ENCODE measurements at regions of chr5 and their contacts with region 1.

Region 1: GRCh38 chr5:138789771-138790242 is 36.6 kb downstream of the CTNNA1 start:
- DNase-seq: no peak
- ATAC-seq: peak; percentile 95
- H3K4me3 ChIP-seq: no peak overlapping the region
- H3K27ac ChIP-seq: no peak overlapping the region
- H3K4me1 ChIP-seq: peaks cover 12% of the 10 kb centered on the region
- H3K27me3 ChIP-seq: no peaks in the 10 kb centered on the region
- CTCF ChIP-seq: peak; percentile 56 to 73 (median 62)
- EP300 ChIP-seq: no peak
- POLR2A ChIP-seq: no peak
- RAD21 ChIP-seq: peak; percentile 31; the same call in 1 of the 2 replicates

Region 2: GRCh38 chr5:137730336-137730735 is 1059.5 kb before region 1 on chr5:
- CTCF ChIA-PET with region 1: no interaction called
- POLR2A ChIA-PET with region 1: no interaction called
- RAD21 ChIA-PET with region 1: no interaction called
- SMC1A ChIA-PET with region 1: no interaction called
- in situ Hi-C with region 1: no loop called
- intact Hi-C with region 1: no loop called
- DNase-seq: no peak
- ATAC-seq: no peak
- H3K4me3 ChIP-seq: no peak overlapping the region; the same call in 1 of the 2 replicates
- H3K27ac ChIP-seq: no peak overlapping the region
- H3K4me1 ChIP-seq: no peaks in the 10 kb centered on the region; the same call in 1 of the 2 replicates
- H3K27me3 ChIP-seq: no peaks in the 10 kb centered on the region
- CTCF ChIP-seq: no peak
- EP300 ChIP-seq: no peak
- POLR2A ChIP-seq: no peak
- RAD21 ChIP-seq: no peak

Region 3: DNA sequence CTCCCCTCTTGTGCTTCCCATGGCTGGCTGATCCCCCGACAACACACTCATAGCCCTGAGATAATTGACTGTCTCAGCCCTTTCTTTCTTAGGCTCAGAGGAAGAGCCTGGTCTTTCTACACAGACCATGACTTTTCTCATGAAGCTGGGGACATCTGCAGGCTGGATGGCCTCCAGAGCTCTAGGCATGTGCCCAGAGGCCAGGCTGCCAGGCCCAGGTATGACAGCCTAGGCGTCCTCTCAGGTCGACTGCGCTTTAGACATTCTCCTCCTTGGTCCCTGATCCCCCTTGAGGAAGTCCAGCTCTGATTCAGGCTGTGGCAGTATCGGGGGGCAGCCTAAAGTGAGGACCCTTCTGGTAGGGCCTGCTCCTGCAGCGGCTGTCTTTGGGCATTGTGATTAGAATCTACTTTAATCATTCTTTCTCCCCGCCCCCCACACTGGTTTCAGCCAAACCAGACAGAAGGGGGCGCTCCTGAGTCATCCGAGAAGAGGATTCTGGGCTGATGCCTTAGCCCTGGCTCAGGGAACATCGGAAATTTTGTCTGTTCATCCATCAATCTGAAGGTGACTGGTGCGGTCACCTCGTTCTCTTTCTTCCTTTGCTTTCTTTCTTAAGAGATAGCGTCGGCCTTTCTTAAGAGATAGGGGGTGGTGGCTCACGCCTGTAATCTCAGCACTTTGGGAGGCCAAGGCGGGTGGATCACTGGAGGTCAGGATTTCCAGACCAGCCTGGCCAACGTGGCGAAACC is 148.1 kb before region 1 on chr5:
- CTCF ChIA-PET with region 1: interaction called, 16 read pairs
- POLR2A ChIA-PET with region 1: no interaction called
- RAD21 ChIA-PET with region 1: no interaction called
- SMC1A ChIA-PET with region 1: interaction called, 10 read pairs
- in situ Hi-C with region 1: no loop called
- intact Hi-C with region 1: no loop called
- DNase-seq: no peak
- ATAC-seq: peak; percentile 91
- H3K4me3 ChIP-seq: no peak overlapping the region
- H3K27ac ChIP-seq: no peak overlapping the region
- H3K4me1 ChIP-seq: no peaks in the 10 kb centered on the region
- H3K27me3 ChIP-seq: no peaks in the 10 kb centered on the region; a peak in 2 of 4 replicates
- CTCF ChIP-seq: peak; percentile 71 to 78 (median 72)
- EP300 ChIP-seq: no peak
- POLR2A ChIP-seq: no peak
- RAD21 ChIP-seq: peak; percentile 86

Region 4: DNA sequence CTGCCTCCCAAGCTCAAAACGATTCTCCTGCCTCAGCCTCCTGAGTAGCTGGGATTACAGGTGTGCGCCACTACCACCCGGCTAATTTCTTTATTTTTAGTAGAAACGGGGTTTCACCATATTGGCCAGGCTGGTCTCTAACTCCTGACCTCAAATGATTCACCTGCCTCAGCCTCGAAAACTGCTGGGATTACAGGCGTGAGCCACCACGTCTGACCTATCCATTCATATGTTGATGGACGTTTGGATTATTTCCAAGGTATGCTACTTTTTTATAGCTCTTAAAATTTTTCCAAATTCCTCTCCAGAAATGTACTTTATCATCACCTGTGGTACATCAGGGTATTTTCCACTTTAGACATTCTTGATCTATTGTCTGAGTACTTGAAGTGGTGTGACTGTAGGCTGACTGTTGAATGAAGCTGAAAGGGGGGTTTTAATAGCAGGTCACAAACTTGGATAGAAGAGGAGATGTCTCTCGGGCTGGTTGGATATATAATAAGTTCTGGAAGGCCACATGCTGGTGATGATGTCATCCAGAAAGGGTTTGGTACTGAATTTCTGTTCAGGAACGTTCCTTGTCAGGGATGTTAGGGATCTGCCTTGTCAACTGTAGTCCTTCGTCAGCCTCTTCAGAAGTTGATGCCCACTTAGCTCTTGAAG is 29.2 kb before region 1 on chr5:
- CTCF ChIA-PET with region 1: interaction called, 24 read pairs
- POLR2A ChIA-PET with region 1: interaction called, 3 read pairs
- RAD21 ChIA-PET with region 1: no interaction called
- SMC1A ChIA-PET with region 1: interaction called, 7 read pairs
- in situ Hi-C with region 1: no loop called
- intact Hi-C with region 1: no loop called
- DNase-seq: no peak
- ATAC-seq: no peak
- H3K4me3 ChIP-seq: no peak overlapping the region
- H3K27ac ChIP-seq: no peak overlapping the region
- H3K4me1 ChIP-seq: peaks cover under 1% of the 10 kb centered on the region
- H3K27me3 ChIP-seq: no peaks in the 10 kb centered on the region
- CTCF ChIP-seq: no peak
- EP300 ChIP-seq: no peak
- POLR2A ChIP-seq: no peak
- RAD21 ChIP-seq: no peak

Region 5: GRCh38 chr5:138809391-138809790 is 19.6 kb after region 1 on chr5:
- CTCF ChIA-PET with region 1: interaction called, 74 read pairs
- POLR2A ChIA-PET with region 1: no interaction called
- RAD21 ChIA-PET with region 1: no interaction called
- SMC1A ChIA-PET with region 1: interaction called, 11 read pairs
- in situ Hi-C with region 1: no loop called
- intact Hi-C with region 1: no loop called
- DNase-seq: no peak
- ATAC-seq: no peak
- H3K4me3 ChIP-seq: no peak overlapping the region
- H3K27ac ChIP-seq: no peak overlapping the region
- H3K4me1 ChIP-seq: no peaks in the 10 kb centered on the region
- H3K27me3 ChIP-seq: no peaks in the 10 kb centered on the region
- CTCF ChIP-seq: no peak
- EP300 ChIP-seq: no peak
- POLR2A ChIP-seq: no peak
- RAD21 ChIP-seq: no peak

Region 6: DNA sequence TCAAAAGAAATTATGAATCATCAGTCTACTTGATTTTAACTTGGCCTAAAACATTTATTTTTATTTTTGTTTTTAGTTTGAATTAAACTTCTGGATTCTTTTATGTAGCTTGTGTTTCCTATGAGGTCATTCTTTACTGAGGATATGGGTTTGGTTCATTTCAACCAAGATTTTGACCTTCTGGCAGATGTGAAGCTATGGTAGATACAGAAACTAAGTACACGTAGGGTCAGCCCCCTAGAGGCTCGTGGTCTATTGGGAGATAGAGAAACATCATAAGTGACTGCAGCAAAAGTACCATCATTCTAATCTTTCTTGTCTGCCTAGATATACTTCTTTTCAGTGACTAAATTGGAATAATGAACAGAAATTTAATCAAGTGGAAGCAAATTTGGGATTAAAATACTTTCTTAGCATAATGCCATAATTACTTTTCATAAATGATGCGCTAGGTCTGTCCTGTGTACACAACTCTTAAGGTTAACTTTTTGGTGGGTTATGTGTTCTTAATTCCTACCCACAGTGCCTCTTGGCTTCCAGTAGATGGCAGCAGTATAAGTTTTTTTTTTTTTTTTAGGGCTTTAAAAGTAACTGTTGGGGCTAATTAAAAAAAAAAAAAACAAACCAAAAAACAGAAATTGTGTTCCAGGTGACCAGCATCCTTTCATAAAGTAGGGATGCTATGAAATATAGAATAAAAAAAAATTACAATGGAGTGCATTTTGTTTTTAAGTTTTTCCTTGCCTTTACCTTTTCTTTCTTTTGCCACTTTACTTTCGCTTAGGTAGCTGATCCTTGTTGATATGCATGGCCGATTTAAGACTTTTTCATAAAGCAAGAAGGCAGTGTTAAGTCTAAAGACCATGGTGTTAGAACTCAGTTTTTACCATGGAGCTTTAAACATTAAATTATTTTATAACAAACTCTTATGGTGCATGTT is 35.4 kb after region 1 on chr5:
- CTCF ChIA-PET with region 1: interaction called, 45 read pairs
- POLR2A ChIA-PET with region 1: no interaction called
- RAD21 ChIA-PET with region 1: no interaction called
- SMC1A ChIA-PET with region 1: interaction called, 4 read pairs
- in situ Hi-C with region 1: no loop called
- intact Hi-C with region 1: no loop called
- DNase-seq: no peak
- ATAC-seq: peak; percentile 77
- H3K4me3 ChIP-seq: no peak overlapping the region
- H3K27ac ChIP-seq: no peak overlapping the region
- H3K4me1 ChIP-seq: no peaks in the 10 kb centered on the region
- H3K27me3 ChIP-seq: no peaks in the 10 kb centered on the region
- CTCF ChIP-seq: peak; percentile 53 to 59 (median 59)
- EP300 ChIP-seq: no peak
- POLR2A ChIP-seq: no peak
- RAD21 ChIP-seq: peak; percentile 51

Region 7: GRCh38 chr5:139137702-139138101 is 347.9 kb after region 1 on chr5:
- CTCF ChIA-PET with region 1: interaction called, 11 read pairs
- POLR2A ChIA-PET with region 1: no interaction called
- RAD21 ChIA-PET with region 1: no interaction called
- SMC1A ChIA-PET with region 1: interaction called, 3 read pairs
- in situ Hi-C with region 1: no loop called
- intact Hi-C with region 1: no loop called
- DNase-seq: no peak
- ATAC-seq: peak; percentile 63
- H3K4me3 ChIP-seq: no peak overlapping the region
- H3K27ac ChIP-seq: no peak overlapping the region
- H3K4me1 ChIP-seq: peaks cover 29% of the 10 kb centered on the region
- H3K27me3 ChIP-seq: no peaks in the 10 kb centered on the region
- CTCF ChIP-seq: peak; percentile 24 to 36 (median 31); a peak in 3 of 6 replicates
- EP300 ChIP-seq: no peak
- POLR2A ChIP-seq: no peak
- RAD21 ChIP-seq: peak; percentile 44; the same call in 1 of the 2 replicates

Measured in GM12878 (cell line).